ENCODE measurements at regions of chr3 and their contacts with region 1.

Region 1: DNA sequence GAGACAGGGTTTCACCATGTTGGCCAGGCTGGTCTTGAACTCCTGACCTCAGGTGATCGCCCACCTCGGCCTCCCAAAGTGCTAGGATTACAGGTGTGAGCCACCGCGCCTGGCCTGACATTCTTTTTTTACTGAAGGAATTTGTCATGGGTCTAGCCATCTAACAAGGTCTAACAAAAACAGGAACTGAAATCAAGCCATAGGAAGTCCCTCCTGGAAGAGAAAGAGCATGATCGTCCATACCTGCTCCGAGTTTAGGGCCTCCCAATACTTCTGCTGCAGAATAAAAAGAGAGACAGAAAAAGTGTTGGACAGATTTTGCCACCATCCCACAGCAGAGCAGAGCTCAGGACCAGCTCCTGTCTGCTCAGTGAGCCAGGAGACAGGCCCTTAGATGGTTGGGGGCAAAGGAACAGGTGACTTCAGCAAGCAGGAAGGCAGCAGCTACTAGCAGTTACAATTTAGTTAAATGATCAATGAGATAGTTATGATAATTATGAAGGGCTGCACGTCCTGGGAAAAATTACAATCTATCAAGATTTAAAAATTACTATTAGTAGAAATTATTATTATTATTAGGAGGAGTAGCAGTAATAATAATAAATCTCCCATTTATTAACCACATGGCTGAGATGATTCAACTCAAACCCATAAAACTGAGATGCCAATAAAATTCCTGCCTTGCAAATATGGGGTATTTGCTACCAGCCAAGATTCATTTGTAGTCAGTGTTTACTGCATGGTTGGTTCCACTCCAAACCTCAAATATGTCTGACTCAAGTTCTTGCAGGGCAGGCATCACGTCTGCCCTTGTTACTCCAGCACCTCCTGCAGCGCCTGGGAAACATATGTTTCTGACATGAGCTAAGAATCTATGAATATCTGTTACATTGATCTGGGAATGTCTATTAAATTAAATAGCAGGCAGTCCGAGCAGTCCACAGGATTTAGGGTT is 40.1 kb downstream of the TMEM44 start:
- DNase-seq: peak in 1 of 2 donors; percentile 83
- H3K4me3 ChIP-seq: no peak overlapping the region
- H3K27ac ChIP-seq: peak overlapping the region; percentile 72 to 83
- H3K4me1 ChIP-seq: peaks cover 2 to 12% of the 10 kb centered on the region in 2 donors
- H3K27me3 ChIP-seq: no peaks in the 10 kb centered on the region
- CTCF ChIP-seq: no peak

Region 2: GRCh38 chr3:194472290-194472920 is 120.7 kb before region 1 on chr3:
- intact Hi-C with region 1: loop called (anchors 1 kb)
- DNase-seq: no peak
- H3K4me3 ChIP-seq: no peak overlapping the region
- H3K27ac ChIP-seq: peak overlapping the region in 1 of 2 donors; percentile 43
- H3K4me1 ChIP-seq: peaks cover 0 to 11% of the 10 kb centered on the region in 2 donors
- H3K27me3 ChIP-seq: no peaks in the 10 kb centered on the region
- CTCF ChIP-seq: peak; percentile 89 to 97 (median 96)

Measured in ascending aorta (tissue), 2 donors.